Activated CD4-positive, alpha-beta T cell treated with anti-CD3 and anti-CD28 coated beads, Interleukin-2, amount 10 ng/mL, durations not matched to agents 24 days and 14 days (primary cell): ENCODE measurements at regions of chr15 and their contacts with region 1.

Region 1: DNA sequence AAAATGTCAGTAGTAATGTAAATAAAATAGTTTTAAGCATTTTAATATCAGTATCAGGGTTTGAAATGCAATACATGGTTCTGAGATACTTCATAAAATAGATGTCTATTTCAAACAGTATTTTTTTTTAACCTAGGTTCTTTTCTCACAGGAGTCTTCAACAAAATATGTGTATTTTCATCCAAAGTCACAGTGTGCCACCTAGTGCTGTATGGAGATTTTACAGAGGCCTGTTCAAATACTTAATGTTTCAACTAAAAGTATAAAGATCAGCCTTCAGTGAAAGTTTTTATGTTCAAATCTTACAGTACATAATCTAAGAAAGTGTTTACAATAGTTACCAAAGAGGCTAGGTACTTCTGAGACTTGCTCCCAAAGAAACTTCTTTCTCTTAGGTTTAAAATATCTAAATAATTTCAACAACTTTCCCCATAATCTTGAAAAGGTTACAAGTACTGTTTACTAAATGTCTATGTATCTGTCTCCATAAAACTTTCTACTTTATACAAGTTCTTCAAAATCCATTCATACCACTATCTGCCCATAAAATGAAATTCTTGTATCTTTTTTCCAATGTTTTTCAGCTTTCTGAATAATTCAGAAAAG is 38.3 kb downstream of the SCAPER start:
- DNase-seq: peak; percentile 68
- H3K4me3 Mint-ChIP-seq: no peak overlapping the region
- H3K27ac Mint-ChIP-seq: no peak overlapping the region
- H3K4me1 Mint-ChIP-seq: peaks cover 22% of the 10 kb centered on the region
- H3K27me3 Mint-ChIP-seq: no peaks in the 10 kb centered on the region

Region 2: DNA sequence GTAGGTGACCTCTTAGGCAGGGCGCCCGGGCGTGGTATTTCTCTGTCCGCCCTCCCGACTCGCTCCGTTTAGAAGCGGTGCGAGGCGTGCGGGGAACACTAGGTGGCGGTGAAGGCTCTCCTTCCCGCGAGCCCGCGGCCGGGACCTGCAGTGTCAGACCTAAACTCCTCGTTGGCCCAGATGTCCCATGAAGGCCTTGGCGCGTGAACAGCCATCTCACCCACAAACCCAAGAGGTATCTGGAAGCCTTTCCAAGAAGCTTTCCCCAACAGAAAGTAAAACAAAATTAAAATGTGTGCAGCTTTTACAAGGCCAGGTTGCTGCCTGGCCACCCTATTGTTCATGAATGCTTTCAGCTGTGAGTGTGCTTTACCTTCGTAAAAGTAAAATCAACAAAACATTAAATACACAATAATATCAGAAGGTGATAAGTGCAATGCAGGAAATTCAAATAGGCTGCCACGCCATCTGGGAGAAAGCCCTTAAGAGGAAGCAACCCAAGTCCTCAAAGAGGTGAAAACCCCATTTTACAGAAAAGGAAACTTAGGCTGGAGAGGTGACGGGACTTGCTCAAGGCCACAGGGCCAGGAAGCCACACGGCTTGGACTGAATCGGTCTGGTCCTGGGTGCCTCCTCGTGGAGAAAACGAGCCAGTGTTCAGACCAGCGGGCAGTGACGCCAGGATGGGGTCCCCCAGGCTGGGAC is 675.8 kb before region 1 on chr15:
- intact Hi-C with region 1: loop called (anchors 5 kb)
- DNase-seq: peak; percentile 92
- H3K4me3 Mint-ChIP-seq: peak overlapping the region; percentile 20
- H3K27ac Mint-ChIP-seq: no peak overlapping the region
- H3K4me1 Mint-ChIP-seq: peaks cover 8% of the 10 kb centered on the region
- H3K27me3 Mint-ChIP-seq: peaks cover 36% of the 10 kb centered on the region

Region 3: GRCh38 chr15:76905013-76905839 is 38.4 kb after region 1 on chr15 and contains the start of gene SCAPER:
- intact Hi-C with region 1: no loop called
- DNase-seq: peak; percentile 97
- H3K4me3 Mint-ChIP-seq: peak within 1 kb of the TSS; percentile 92
- H3K27ac Mint-ChIP-seq: peak within 1 kb of the TSS; percentile 91
- H3K4me1 Mint-ChIP-seq: peaks cover 30% of the 10 kb centered on the region
- H3K27me3 Mint-ChIP-seq: peaks cover 4% of the 10 kb centered on the region
- total RNA-seq, gene SCAPER: 24.3 and 31.0 TPM in 2 replicates